MCF 10A (cell line): ENCODE measurements at regions of chr2 and their contacts with region 1.

Region 1: GRCh38 chr2:143499061-143499460 is 369.8 kb downstream of the ARHGAP15 start:
- DNase-seq: no peak
- H3K4me3 Mint-ChIP-seq: no peak overlapping the region
- H3K27ac Mint-ChIP-seq: no peak overlapping the region
- H3K4me1 Mint-ChIP-seq: no peaks in the 10 kb centered on the region
- H3K27me3 Mint-ChIP-seq: no peaks in the 10 kb centered on the region
- CTCF ChIP-seq: no peak

Region 2: DNA sequence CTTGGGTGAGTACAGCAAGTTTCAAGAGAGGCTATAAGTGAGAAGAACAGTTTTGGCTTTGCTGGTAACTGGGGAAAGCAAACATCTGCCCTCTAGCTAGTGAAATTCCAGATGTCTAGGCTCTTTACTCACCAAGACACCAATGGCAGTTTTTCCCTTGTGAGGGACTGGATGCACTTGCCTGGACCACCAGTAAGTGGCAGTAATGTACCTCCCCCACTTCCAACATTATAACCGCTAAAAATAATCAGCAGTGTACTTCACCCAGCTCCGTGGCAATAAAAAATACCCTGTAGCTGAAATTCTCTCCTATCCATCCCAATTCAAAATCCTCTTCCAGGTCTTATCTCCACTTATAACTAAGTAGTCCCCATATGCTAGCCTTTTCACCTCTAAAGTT is 14.0 kb after region 1 on chr2:
- CTCF ChIA-PET with region 1: no interaction called
- POLR2A ChIA-PET with region 1: no interaction called
- intact Hi-C with region 1: no loop called
- DNase-seq: peak; percentile 49
- H3K4me3 Mint-ChIP-seq: no peak overlapping the region
- H3K27ac Mint-ChIP-seq: no peak overlapping the region
- H3K4me1 Mint-ChIP-seq: peaks cover 13% of the 10 kb centered on the region
- H3K27me3 Mint-ChIP-seq: no peaks in the 10 kb centered on the region
- CTCF ChIP-seq: no peak

Region 3: DNA sequence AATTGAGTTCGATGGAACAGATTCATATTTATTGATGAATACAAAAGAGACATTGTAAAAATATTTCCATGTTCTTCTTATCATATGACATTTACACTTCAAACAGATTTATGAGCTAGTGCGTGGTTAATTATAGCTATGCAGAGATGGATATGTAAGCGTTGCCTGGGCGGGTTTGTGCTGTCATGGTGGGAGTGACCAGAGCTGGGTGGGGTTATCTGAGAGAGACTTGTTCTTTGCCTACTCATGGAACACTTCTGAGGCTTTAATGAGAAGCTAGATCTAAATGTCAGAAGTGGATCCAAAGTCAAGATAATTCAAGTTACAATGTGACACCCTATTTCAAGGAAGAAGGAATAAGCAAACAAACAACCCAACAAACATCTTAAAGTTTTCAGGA is 1183.2 kb after region 1 on chr2:
- CTCF ChIA-PET with region 1: no interaction called
- POLR2A ChIA-PET with region 1: no interaction called
- intact Hi-C with region 1: loop called (anchors 5 kb)
- DNase-seq: no peak
- H3K4me3 Mint-ChIP-seq: no peak overlapping the region
- H3K27ac Mint-ChIP-seq: peak overlapping the region; percentile 1
- H3K4me1 Mint-ChIP-seq: peaks cover 10% of the 10 kb centered on the region
- H3K27me3 Mint-ChIP-seq: no peaks in the 10 kb centered on the region
- CTCF ChIP-seq: no peak